ENCODE measurements at regions of chr11 and their contacts with region 1.

Region 1: GRCh38 chr11:113401716-113402115 is 14.1 kb downstream of the ANKK1 start:
- DNase-seq: no peak

Region 2: DNA sequence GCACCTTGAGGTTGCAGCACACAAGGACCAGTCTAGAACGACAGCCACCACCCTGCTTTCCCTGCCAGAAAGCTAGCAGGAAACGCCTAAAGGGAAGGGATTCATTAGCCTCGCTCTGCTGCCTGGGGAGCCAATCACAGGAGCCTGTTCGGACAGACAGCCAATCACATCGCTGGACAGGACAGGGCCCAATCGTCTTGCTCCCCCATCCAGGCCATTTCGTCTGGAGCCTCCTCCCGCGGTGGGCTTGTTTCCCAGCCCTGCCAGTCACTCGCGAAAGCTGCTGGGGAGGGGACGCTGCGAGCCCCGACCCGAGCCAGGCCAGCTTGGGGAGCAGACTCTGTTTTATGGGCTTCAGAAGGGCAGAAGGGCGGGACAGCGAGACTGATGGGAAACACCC is 520.3 kb before region 1 on chr11:
- intact Hi-C with region 1: loop called in 1 of 2 experiments (anchors 5 kb)
- DNase-seq: peak; percentile 87

Measured in posterior vena cava (tissue), 2 donors.